ENCODE measurements at regions of chr20 and their contacts with region 1.

Region 1: GRCh38 chr20:32674362-32674789 is 635 bp upstream of the C20orf203 start:
- DNase-seq: peak; percentile 65 to 67 (median 65)
- H3K4me3 ChIP-seq: no peak overlapping the region
- H3K4me3 Mint-ChIP-seq: no peak overlapping the region
- H3K27ac ChIP-seq: no peak overlapping the region
- H3K27ac Mint-ChIP-seq: peak overlapping the region in 1 of 7 donors; percentile 3
- H3K4me1 ChIP-seq: peaks cover 12% of the 10 kb centered on the region
- H3K4me1 Mint-ChIP-seq: peaks cover 3 to 20% (median 9%) of the 10 kb centered on the region in 4 donors
- H3K27me3 ChIP-seq: no peaks in the 10 kb centered on the region
- H3K27me3 Mint-ChIP-seq: no peaks in the 10 kb centered on the region

Region 2: DNA sequence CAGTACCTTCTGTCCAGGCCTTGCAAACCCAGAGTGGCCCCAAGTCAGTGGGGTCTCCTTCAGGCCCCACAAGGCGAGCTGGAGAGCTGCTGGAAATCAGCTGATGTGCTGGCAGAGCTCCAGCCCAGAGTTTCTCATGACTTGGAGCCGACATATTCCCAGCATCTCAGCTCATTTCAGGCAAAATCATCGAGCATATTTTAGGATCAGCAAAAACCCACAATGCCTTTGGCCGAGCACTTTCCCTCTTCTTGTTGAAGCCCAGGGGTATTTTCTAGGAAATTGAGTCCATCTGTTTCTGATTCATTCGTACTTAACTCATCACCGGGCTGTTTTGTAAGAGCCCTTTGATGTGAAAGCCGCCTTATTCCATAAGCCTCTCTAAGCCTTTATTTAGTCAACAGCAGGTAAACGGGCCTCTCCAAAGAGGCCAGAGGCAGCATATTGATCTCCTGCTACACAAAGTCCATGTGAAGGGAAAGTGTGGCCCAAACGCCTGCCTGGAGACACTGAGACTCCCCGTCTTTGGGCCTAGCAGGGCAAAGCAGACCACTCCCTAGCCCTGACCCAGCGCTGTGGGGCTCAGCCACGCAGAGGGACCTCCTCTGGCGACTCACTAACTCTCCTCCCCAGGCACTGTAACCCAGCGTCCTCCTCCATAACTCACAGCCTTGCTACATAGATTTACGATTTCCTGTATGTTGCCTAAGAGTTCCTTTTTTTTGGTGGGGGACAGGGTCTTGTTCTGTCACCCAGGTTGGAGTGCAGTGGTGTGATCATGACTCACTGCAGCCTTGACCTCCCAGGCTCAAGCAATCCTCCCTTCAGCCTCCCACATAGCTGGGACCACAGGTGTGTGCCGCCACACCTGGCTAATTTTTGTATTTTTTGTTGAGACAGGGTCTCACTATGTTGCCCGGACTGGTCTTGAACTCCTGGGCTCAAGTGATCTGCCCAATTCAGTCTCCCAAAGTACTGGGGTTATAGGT is 11.5 kb after region 1 on chr20:
- CTCF ChIA-PET with region 1: interaction called, 15 read pairs
- POLR2A ChIA-PET with region 1: no interaction called
- intact Hi-C with region 1: no loop called
- DNase-seq: no peak
- H3K4me3 ChIP-seq: no peak overlapping the region
- H3K4me3 Mint-ChIP-seq: no peak overlapping the region
- H3K27ac ChIP-seq: no peak overlapping the region
- H3K27ac Mint-ChIP-seq: peak overlapping the region in 1 of 7 donors; percentile 22
- H3K4me1 ChIP-seq: no peaks in the 10 kb centered on the region
- H3K4me1 Mint-ChIP-seq: peaks cover 0 to 5% (median 2%) of the 10 kb centered on the region in 4 donors
- H3K27me3 ChIP-seq: no peaks in the 10 kb centered on the region
- H3K27me3 Mint-ChIP-seq: no peaks in the 10 kb centered on the region

Region 3: GRCh38 chr20:32727683-32728082 is 53.3 kb after region 1 on chr20:
- CTCF ChIA-PET with region 1: interaction called, 6 read pairs
- POLR2A ChIA-PET with region 1: no interaction called
- intact Hi-C with region 1: loop called (anchors 10 kb)
- DNase-seq: no peak
- H3K4me3 ChIP-seq: no peak overlapping the region
- H3K4me3 Mint-ChIP-seq: no peak overlapping the region
- H3K27ac ChIP-seq: no peak overlapping the region
- H3K27ac Mint-ChIP-seq: peak overlapping the region in 4 of 7 donors; percentile 32 to 74 (median 60)
- H3K4me1 ChIP-seq: peaks cover 11% of the 10 kb centered on the region
- H3K4me1 Mint-ChIP-seq: peaks cover 14 to 24% (median 15%) of the 10 kb centered on the region in 4 donors
- H3K27me3 ChIP-seq: no peaks in the 10 kb centered on the region
- H3K27me3 Mint-ChIP-seq: no peaks in the 10 kb centered on the region

Region 4: GRCh38 chr20:32737371-32738223 is 63.2 kb after region 1 on chr20:
- CTCF ChIA-PET with region 1: interaction called, 11 read pairs
- POLR2A ChIA-PET with region 1: no interaction called
- intact Hi-C with region 1: no loop called
- DNase-seq: peak; percentile 59 to 78 (median 67)
- H3K4me3 ChIP-seq: peak overlapping the region in 1 of 2 donors; percentile 19
- H3K4me3 Mint-ChIP-seq: peak overlapping the region; percentile 31 to 76 (median 66)
- H3K27ac ChIP-seq: peak overlapping the region; percentile 41
- H3K27ac Mint-ChIP-seq: peak overlapping the region; percentile 92 to 96 (median 93)
- H3K4me1 ChIP-seq: peaks cover 57% of the 10 kb centered on the region
- H3K4me1 Mint-ChIP-seq: peaks cover 22 to 62% (median 43%) of the 10 kb centered on the region in 4 donors
- H3K27me3 ChIP-seq: no peaks in the 10 kb centered on the region
- H3K27me3 Mint-ChIP-seq: no peaks in the 10 kb centered on the region

Region 5: DNA sequence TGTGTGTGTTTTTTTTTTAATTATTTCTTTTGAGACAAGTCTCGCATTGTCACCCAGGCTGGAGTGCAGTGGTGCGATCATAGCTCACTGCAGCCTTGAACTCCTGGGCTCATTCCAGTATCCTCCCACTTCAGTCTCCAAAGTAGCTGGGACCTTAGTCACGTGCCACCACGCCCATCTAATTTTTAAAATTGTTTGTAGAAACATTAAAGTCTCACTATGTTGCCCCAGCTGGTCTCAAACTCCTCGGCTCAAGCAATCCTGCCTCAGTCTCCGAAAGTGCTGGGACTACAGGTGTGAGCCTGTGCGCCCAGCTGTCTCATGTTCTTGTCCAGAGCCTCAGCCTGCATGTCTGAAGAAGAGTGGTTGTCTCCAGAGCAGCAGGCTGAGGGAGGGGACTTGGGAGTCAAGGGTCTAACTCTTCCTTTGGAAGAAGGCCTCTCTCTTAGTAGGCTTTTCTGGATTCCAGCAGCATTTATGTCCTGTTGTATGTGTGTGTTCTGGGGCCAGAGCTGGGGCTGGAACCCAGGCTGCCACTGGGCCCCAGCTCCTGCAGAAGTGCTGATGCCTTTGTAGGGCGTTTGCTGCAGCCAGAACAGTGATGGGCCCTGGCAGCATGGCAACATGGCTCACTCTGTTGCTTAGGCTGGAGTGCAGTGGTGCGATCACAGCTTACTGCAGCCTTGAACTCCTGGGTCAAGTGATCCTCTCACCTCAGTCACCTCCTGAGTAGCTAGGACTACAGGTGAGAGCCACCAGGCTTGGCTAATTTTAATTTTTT is 93.2 kb after region 1 on chr20:
- CTCF ChIA-PET with region 1: interaction called, 14 read pairs
- POLR2A ChIA-PET with region 1: no interaction called
- intact Hi-C with region 1: no loop called
- DNase-seq: no peak
- H3K4me3 ChIP-seq: no peak overlapping the region
- H3K4me3 Mint-ChIP-seq: no peak overlapping the region
- H3K27ac ChIP-seq: no peak overlapping the region
- H3K27ac Mint-ChIP-seq: peak overlapping the region in 2 of 7 donors; percentile 37 to 51
- H3K4me1 ChIP-seq: peaks cover 24% of the 10 kb centered on the region
- H3K4me1 Mint-ChIP-seq: peaks cover 11 to 27% (median 19%) of the 10 kb centered on the region in 4 donors
- H3K27me3 ChIP-seq: no peaks in the 10 kb centered on the region
- H3K27me3 Mint-ChIP-seq: no peaks in the 10 kb centered on the region

Measured in CD4-positive, alpha-beta memory T cell (primary cell).